ENCODE measurements at regions of chr1 and their contacts with region 1.

Region 1: GRCh38 chr1:103514920-103515503 is 10.5 kb upstream of the RNPC3 start:
- DNase-seq: peak in 2 of 5 donors; percentile 34 to 44
- H3K4me3 ChIP-seq: no peak overlapping the region
- H3K4me3 Mint-ChIP-seq: no peak overlapping the region
- H3K27ac ChIP-seq: no peak overlapping the region
- H3K27ac Mint-ChIP-seq: peak overlapping the region in 1 of 8 donors; percentile 79
- H3K4me1 ChIP-seq: no peaks in the 10 kb centered on the region
- H3K4me1 Mint-ChIP-seq: peaks cover 1 to 6% (median 4%) of the 10 kb centered on the region in 3 donors
- H3K27me3 ChIP-seq: no peaks in the 10 kb centered on the region
- H3K27me3 Mint-ChIP-seq: no peaks in the 10 kb centered on the region

Region 2: GRCh38 chr1:103497404-103497803 is 17.6 kb before region 1 on chr1:
- CTCF ChIA-PET with region 1: no interaction called
- POLR2A ChIA-PET with region 1: no interaction called
- DNase-seq: no peak
- H3K4me3 ChIP-seq: no peak overlapping the region
- H3K4me3 Mint-ChIP-seq: no peak overlapping the region
- H3K27ac ChIP-seq: no peak overlapping the region
- H3K27ac Mint-ChIP-seq: no peak overlapping the region
- H3K4me1 ChIP-seq: no peaks in the 10 kb centered on the region
- H3K4me1 Mint-ChIP-seq: no peaks in the 10 kb centered on the region
- H3K27me3 ChIP-seq: no peaks in the 10 kb centered on the region
- H3K27me3 Mint-ChIP-seq: peaks cover 2 to 33% of the 10 kb centered on the region in 2 donors

Region 3: GRCh38 chr1:103525607-103526507 is 10.8 kb after region 1 on chr1 and contains the start of gene RNPC3:
- CTCF ChIA-PET with region 1: interaction called, 4 read pairs
- POLR2A ChIA-PET with region 1: interaction called, 13 read pairs
- DNase-seq: peak; percentile 82 to 90 (median 88)
- H3K4me3 ChIP-seq: peak within 1 kb of the TSS; percentile 86
- H3K4me3 Mint-ChIP-seq: peak within 1 kb of the TSS; percentile 97 to 100 (median 99)
- H3K27ac ChIP-seq: peak within 1 kb of the TSS; percentile 84
- H3K27ac Mint-ChIP-seq: peak within 1 kb of the TSS; percentile 93 to 99 (median 99)
- H3K4me1 ChIP-seq: peaks cover 41% of the 10 kb centered on the region
- H3K4me1 Mint-ChIP-seq: peaks cover 52 to 61% (median 54%) of the 10 kb centered on the region in 3 donors
- H3K27me3 ChIP-seq: no peaks in the 10 kb centered on the region
- H3K27me3 Mint-ChIP-seq: no peaks in the 10 kb centered on the region
- total RNA-seq, gene RNPC3: 14.9 to 17.6 TPM

Measured in CD8-positive, alpha-beta memory T cell (primary cell).